Activated B cell treated with CpG ODN at 0.5 μM for 24 hours (primary cell): ENCODE measurements at regions of chr14 and their contacts with region 1.

Region 1: DNA sequence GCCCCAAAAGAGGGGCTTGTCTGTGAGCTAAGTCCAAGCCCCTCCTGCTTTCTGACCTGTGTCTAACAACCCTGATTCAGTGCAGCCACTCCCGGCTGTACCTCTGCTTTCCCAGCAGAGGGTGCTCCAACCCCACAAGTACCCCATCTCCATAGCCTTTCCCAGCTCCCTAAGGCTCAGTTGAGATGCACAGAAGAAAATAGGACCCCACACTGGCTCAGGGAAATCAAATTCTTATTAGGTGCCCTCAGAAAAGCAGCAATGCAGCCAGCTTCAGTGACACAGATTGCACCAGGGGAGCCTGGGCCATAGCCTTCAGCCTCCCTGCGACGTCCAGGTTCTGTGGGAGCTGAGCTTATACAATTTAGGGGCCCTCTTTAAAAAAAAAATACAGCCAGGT is 49.9 kb downstream of the LRRC74A start:
- DNase-seq: no peak
- ATAC-seq: peak; percentile 54
- H3K4me3 Mint-ChIP-seq: no peak overlapping the region
- H3K27ac Mint-ChIP-seq: no peak overlapping the region
- H3K4me1 Mint-ChIP-seq: no peaks in the 10 kb centered on the region
- H3K27me3 Mint-ChIP-seq: no peaks in the 10 kb centered on the region
- CTCF ChIP-seq: no peak

Region 2: GRCh38 chr14:76904740-76905438 is 28.8 kb after region 1 on chr14:
- CTCF ChIA-PET with region 1: interaction called, 16 read pairs
- POLR2A ChIA-PET with region 1: interaction called, 4 read pairs
- intact Hi-C with region 1: loop called (anchors 2 kb)
- DNase-seq: peak; percentile 73
- ATAC-seq: peak; percentile 92
- H3K4me3 Mint-ChIP-seq: peak overlapping the region; percentile 63
- H3K27ac Mint-ChIP-seq: peak overlapping the region; percentile 93
- H3K4me1 Mint-ChIP-seq: peaks cover 39% of the 10 kb centered on the region
- H3K27me3 Mint-ChIP-seq: no peaks in the 10 kb centered on the region
- CTCF ChIP-seq: no peak

Region 3: DNA sequence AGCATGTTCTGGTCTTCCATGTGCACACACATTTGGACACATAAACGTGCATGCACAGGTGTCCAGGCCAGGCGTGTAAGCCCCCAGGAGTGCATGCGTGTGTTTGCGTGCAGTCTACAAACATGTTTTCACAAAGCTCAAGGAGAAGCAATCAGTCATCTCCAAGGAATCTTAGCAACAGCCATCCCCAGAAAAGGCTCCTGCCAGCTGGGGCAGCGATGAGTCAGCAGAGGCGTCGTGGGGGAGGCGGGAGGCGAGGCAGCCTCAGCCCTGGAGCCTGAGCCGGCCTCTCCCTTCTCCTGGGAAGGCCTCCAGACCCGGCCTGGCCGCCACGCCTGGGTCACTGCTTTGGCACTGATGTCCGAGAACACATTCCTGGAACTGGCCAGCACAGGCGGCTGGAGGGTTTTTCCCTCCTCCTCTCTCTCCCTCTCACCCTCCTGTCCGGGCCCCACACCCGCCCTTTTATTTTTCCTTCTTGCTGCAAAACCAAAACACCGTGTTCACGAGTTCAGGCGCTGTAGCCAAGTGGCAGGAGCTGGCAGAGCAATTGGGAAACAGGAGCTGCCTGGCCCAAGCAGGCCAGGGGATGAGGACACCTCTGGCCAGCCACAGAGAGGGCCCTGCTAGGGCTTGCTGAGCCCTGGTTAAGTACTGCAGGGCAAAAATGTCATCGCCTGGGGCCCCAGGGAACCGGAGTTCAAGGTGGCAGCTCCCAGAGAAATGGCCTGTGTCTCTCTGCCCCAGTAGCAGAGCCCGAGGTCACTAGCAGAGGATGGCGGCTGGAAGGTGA is 42.9 kb after region 1 on chr14:
- CTCF ChIA-PET with region 1: interaction called, 36 read pairs
- POLR2A ChIA-PET with region 1: no interaction called
- intact Hi-C with region 1: no loop called
- DNase-seq: no peak
- ATAC-seq: no peak
- H3K4me3 Mint-ChIP-seq: no peak overlapping the region
- H3K27ac Mint-ChIP-seq: no peak overlapping the region
- H3K4me1 Mint-ChIP-seq: peaks cover 25% of the 10 kb centered on the region
- H3K27me3 Mint-ChIP-seq: peaks cover 15% of the 10 kb centered on the region
- CTCF ChIP-seq: no peak

Region 4: DNA sequence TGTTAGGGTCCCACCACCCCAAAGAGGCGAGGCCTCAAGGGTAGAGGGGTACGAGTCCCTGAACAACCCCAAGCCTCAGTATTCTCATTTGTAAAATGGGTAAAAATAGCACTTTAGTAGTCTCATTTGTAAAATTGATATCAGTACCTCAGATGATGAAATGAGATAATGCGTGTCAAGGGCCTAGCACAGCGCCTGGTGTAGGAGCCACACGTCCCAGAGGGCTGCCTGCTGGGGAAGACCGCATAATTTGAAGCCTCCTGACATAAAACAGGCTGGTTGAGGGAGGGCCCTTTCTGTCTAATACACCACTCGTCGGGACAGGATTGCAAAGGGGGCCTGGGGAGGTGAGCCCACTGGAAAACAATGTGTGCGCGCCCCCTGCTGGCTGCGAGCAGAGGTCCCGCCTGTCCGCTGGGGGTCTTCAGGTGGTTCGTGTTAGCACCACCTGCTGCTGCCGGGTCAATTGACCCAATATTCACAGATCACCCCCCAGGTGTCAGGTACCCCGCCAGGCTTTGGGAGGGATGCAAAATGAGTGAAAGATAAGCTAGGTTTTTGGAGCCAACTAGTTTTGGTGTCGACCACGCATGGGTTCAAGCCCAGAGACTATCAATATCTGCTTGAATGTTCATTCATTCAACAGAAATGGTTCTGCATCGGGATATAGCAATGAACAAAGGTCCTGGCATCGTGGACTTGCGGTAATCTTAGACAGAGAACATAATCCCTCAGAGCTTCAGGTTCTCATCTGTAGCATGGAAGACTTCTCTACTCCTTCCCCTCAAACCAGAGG is 177.2 kb after region 1 on chr14:
- CTCF ChIA-PET with region 1: interaction called, 73 read pairs
- POLR2A ChIA-PET with region 1: no interaction called
- intact Hi-C with region 1: loop called (anchors 1 kb)
- DNase-seq: peak; percentile 79
- ATAC-seq: peak; percentile 90
- H3K4me3 Mint-ChIP-seq: no peak overlapping the region
- H3K27ac Mint-ChIP-seq: peak overlapping the region; percentile 24
- H3K4me1 Mint-ChIP-seq: peaks cover 8% of the 10 kb centered on the region
- H3K27me3 Mint-ChIP-seq: no peaks in the 10 kb centered on the region
- CTCF ChIP-seq: peak; percentile 74

Region 5: GRCh38 chr14:77097700-77098528 is 221.8 kb after region 1 on chr14 and contains the start of gene CIPC:
- CTCF ChIA-PET with region 1: interaction called, 10 read pairs
- POLR2A ChIA-PET with region 1: no interaction called
- intact Hi-C with region 1: loop called (anchors 1 kb)
- DNase-seq: peak; percentile 96
- ATAC-seq: peak; percentile 86
- H3K4me3 Mint-ChIP-seq: peak within 1 kb of the TSS; percentile 99
- H3K27ac Mint-ChIP-seq: peak within 1 kb of the TSS; percentile 98
- H3K4me1 Mint-ChIP-seq: peaks cover 72% of the 10 kb centered on the region
- H3K27me3 Mint-ChIP-seq: no peaks in the 10 kb centered on the region
- CTCF ChIP-seq: no peak
- total RNA-seq, gene CIPC: 26.6 and 28.5 TPM in 2 replicates